ENCODE measurements at regions of chr18 and their contacts with region 1.

Region 1: GRCh38 chr18:21760321-21760720 is 19.7 kb downstream of the MIB1 start:
- DNase-seq: peak; percentile 65
- ATAC-seq: peak; percentile 32
- H3K4me3 ChIP-seq: no peak overlapping the region
- H3K27ac ChIP-seq: no peak overlapping the region
- H3K4me1 ChIP-seq: peaks cover 4% of the 10 kb centered on the region; the same call in 1 of the 2 replicates
- H3K27me3 ChIP-seq: no peaks in the 10 kb centered on the region
- CTCF ChIP-seq: no peak
- POLR2A ChIP-seq: no peak
- RAD21 ChIP-seq: no peak

Region 2: GRCh38 chr18:21064347-21064746 is 696.0 kb before region 1 on chr18:
- CTCF ChIA-PET with region 1: no interaction called
- POLR2A ChIA-PET with region 1: no interaction called
- dilution Hi-C with region 1: no loop called
- in situ Hi-C with region 1: no loop called
- intact Hi-C with region 1: loop called (anchors 5 kb)
- DNase-seq: peak; percentile 37
- ATAC-seq: peak; percentile 64
- H3K4me3 ChIP-seq: no peak overlapping the region
- H3K27ac ChIP-seq: no peak overlapping the region
- H3K4me1 ChIP-seq: peaks cover 3% of the 10 kb centered on the region; the same call in 1 of the 2 replicates
- H3K27me3 ChIP-seq: no peaks in the 10 kb centered on the region
- CTCF ChIP-seq: no peak
- POLR2A ChIP-seq: no peak
- RAD21 ChIP-seq: no peak

Region 3: GRCh38 chr18:21452796-21453510 is 307.4 kb before region 1 on chr18:
- CTCF ChIA-PET with region 1: no interaction called
- POLR2A ChIA-PET with region 1: no interaction called
- dilution Hi-C with region 1: no loop called
- in situ Hi-C with region 1: no loop called
- intact Hi-C with region 1: no loop called
- DNase-seq: no peak
- ATAC-seq: peak; percentile 39
- H3K4me3 ChIP-seq: no peak overlapping the region
- H3K27ac ChIP-seq: no peak overlapping the region
- H3K4me1 ChIP-seq: peaks cover 5% of the 10 kb centered on the region; the same call in 1 of the 2 replicates
- H3K27me3 ChIP-seq: peaks cover 34% of the 10 kb centered on the region
- CTCF ChIP-seq: no peak
- POLR2A ChIP-seq: no peak
- RAD21 ChIP-seq: no peak

Region 4: GRCh38 chr18:21740724-21741510 is 19.4 kb before region 1 on chr18 and contains the start of gene MIB1:
- CTCF ChIA-PET with region 1: no interaction called
- POLR2A ChIA-PET with region 1: interaction called, 15 read pairs
- dilution Hi-C with region 1: no loop called
- in situ Hi-C with region 1: no loop called
- intact Hi-C with region 1: no loop called
- DNase-seq: peak; percentile 41
- ATAC-seq: peak; percentile 80
- H3K4me3 ChIP-seq: peak within 1 kb of the TSS; percentile 78
- H3K27ac ChIP-seq: peak within 1 kb of the TSS; percentile 97
- H3K4me1 ChIP-seq: no peaks in the 10 kb centered on the region; the same call in 1 of the 2 replicates
- H3K27me3 ChIP-seq: no peaks in the 10 kb centered on the region
- CTCF ChIP-seq: no peak
- POLR2A ChIP-seq: peak; percentile 71
- RAD21 ChIP-seq: no peak
- total RNA-seq, gene MIB1: 80.1 and 83.6 TPM in 2 replicates